ENCODE measurements at regions of chr4 and their contacts with region 1.

Region 1: GRCh38 chr4:152100379-152101201 is 339.8 kb upstream of the GATB start:
- DNase-seq: peak; percentile 91 to 95 (median 94)
- H3K4me3 ChIP-seq: peak overlapping the region; percentile 33 to 70
- H3K4me3 Mint-ChIP-seq: peak overlapping the region; percentile 76 to 92 (median 90)
- H3K27ac ChIP-seq: peak overlapping the region; percentile 78
- H3K27ac Mint-ChIP-seq: peak overlapping the region; percentile 96 to 99 (median 98)
- H3K4me1 ChIP-seq: peaks cover 95% of the 10 kb centered on the region
- H3K4me1 Mint-ChIP-seq: peaks cover 66 to 97% (median 86%) of the 10 kb centered on the region in 4 donors
- H3K27me3 ChIP-seq: no peaks in the 10 kb centered on the region
- H3K27me3 Mint-ChIP-seq: no peaks in the 10 kb centered on the region

Region 2: GRCh38 chr4:151744614-151745013 is 356.0 kb before region 1 on chr4:
- CTCF ChIA-PET with region 1: no interaction called
- POLR2A ChIA-PET with region 1: no interaction called
- intact Hi-C with region 1: no loop called
- DNase-seq: no peak
- H3K4me3 ChIP-seq: no peak overlapping the region
- H3K4me3 Mint-ChIP-seq: no peak overlapping the region
- H3K27ac ChIP-seq: no peak overlapping the region
- H3K27ac Mint-ChIP-seq: no peak overlapping the region
- H3K4me1 ChIP-seq: no peaks in the 10 kb centered on the region
- H3K4me1 Mint-ChIP-seq: no peaks in the 10 kb centered on the region
- H3K27me3 ChIP-seq: no peaks in the 10 kb centered on the region
- H3K27me3 Mint-ChIP-seq: no peaks in the 10 kb centered on the region

Region 3: DNA sequence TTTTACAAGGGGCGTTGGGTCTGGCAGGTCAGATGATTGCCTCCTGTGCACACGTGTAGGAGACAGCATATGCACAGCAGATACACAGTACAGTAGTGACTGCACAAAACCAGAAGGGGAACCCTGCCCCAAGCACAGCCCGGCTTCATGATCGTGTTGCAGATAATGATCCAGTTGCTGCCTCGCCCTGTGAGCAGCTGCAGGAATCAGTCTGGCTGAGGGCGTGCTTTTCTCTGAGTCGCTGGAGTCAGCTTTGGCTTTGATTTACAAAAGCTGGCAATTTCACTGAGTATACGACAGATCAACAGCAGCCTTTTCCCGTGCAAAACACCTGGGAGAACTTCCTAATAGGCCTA is 36.7 kb before region 1 on chr4:
- CTCF ChIA-PET with region 1: interaction called, 14 read pairs
- POLR2A ChIA-PET with region 1: interaction called, 25 read pairs
- intact Hi-C with region 1: loop called (anchors 2 kb)
- DNase-seq: peak; percentile 61 to 73 (median 70)
- H3K4me3 ChIP-seq: no peak overlapping the region
- H3K4me3 Mint-ChIP-seq: peak overlapping the region in 7 of 8 donors; percentile 23 to 72 (median 51)
- H3K27ac ChIP-seq: no peak overlapping the region
- H3K27ac Mint-ChIP-seq: peak overlapping the region; percentile 32 to 82 (median 63)
- H3K4me1 ChIP-seq: peaks cover 44% of the 10 kb centered on the region
- H3K4me1 Mint-ChIP-seq: peaks cover 32 to 60% (median 40%) of the 10 kb centered on the region in 4 donors
- H3K27me3 ChIP-seq: no peaks in the 10 kb centered on the region
- H3K27me3 Mint-ChIP-seq: no peaks in the 10 kb centered on the region

Region 4: DNA sequence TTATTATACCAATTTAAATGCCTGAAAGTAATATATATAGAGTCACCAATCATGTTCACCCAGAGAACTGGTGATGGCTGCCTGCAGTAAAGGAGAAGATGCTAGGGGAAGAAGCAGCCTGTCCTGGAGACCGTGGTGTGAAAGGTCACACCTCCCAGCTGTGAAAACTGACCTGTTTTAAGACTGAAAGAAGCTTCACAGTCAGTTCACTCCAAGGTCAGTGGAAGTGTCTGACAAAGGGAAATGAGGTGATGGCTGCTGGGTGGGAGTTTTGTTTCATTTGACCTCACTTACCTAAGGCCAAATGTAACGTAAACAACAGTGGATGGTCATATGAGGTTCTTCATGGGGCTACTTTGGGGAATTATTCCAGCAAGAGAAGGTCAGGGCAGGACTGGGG is 12.3 kb after region 1 on chr4:
- CTCF ChIA-PET with region 1: interaction called, 11 read pairs
- POLR2A ChIA-PET with region 1: interaction called, 145 read pairs
- intact Hi-C with region 1: loop called (anchors 1 kb)
- DNase-seq: no peak
- H3K4me3 ChIP-seq: no peak overlapping the region
- H3K4me3 Mint-ChIP-seq: peak overlapping the region in 2 of 8 donors; percentile 41 to 52
- H3K27ac ChIP-seq: no peak overlapping the region
- H3K27ac Mint-ChIP-seq: peak overlapping the region; percentile 35 to 93 (median 80)
- H3K4me1 ChIP-seq: peaks cover 70% of the 10 kb centered on the region
- H3K4me1 Mint-ChIP-seq: peaks cover 64 to 90% (median 77%) of the 10 kb centered on the region in 4 donors
- H3K27me3 ChIP-seq: no peaks in the 10 kb centered on the region
- H3K27me3 Mint-ChIP-seq: no peaks in the 10 kb centered on the region

Region 5: GRCh38 chr4:152221816-152222516 is 121.4 kb after region 1 on chr4:
- CTCF ChIA-PET with region 1: no interaction called
- POLR2A ChIA-PET with region 1: interaction called, 11 read pairs
- intact Hi-C with region 1: no loop called
- DNase-seq: peak in 3 of 5 donors; percentile 5 to 19 (median 9)
- H3K4me3 ChIP-seq: no peak overlapping the region
- H3K4me3 Mint-ChIP-seq: peak overlapping the region in 6 of 8 donors; percentile 1 to 36 (median 24)
- H3K27ac ChIP-seq: no peak overlapping the region
- H3K27ac Mint-ChIP-seq: peak overlapping the region in 6 of 7 donors; percentile 65 to 88 (median 81)
- H3K4me1 ChIP-seq: no peaks in the 10 kb centered on the region
- H3K4me1 Mint-ChIP-seq: peaks cover 5 to 17% (median 12%) of the 10 kb centered on the region in 4 donors
- H3K27me3 ChIP-seq: no peaks in the 10 kb centered on the region
- H3K27me3 Mint-ChIP-seq: no peaks in the 10 kb centered on the region

Region 6: DNA sequence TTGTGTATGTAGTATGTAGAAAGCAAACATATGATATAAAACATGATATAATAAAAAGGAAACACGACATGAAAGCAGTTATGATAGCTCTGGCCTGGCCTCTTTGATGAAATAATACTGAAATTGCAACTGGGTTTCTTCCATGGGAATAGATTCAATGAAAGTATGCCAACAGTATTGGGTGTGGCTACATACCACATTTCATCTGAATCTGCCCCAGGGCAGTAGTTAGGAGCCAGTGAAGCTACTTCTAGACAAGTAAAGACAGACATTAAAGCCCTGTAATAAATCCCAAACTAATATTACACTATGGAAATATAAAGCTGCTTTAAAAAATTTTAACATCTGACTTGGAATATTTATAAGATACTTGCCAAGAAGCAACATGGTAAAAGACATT is 228.0 kb after region 1 on chr4:
- CTCF ChIA-PET with region 1: no interaction called
- POLR2A ChIA-PET with region 1: interaction called, 10 read pairs
- intact Hi-C with region 1: loop called (anchors 5 kb)
- DNase-seq: no peak
- H3K4me3 ChIP-seq: no peak overlapping the region
- H3K4me3 Mint-ChIP-seq: peak overlapping the region in 1 of 8 donors; percentile 56
- H3K27ac ChIP-seq: no peak overlapping the region
- H3K27ac Mint-ChIP-seq: peak overlapping the region in 3 of 7 donors; percentile 53 to 70 (median 65)
- H3K4me1 ChIP-seq: peaks cover 22% of the 10 kb centered on the region
- H3K4me1 Mint-ChIP-seq: peaks cover 14 to 24% (median 17%) of the 10 kb centered on the region in 4 donors
- H3K27me3 ChIP-seq: no peaks in the 10 kb centered on the region
- H3K27me3 Mint-ChIP-seq: no peaks in the 10 kb centered on the region